GM18951 (cell line): ENCODE measurements at regions of chr14 and their contacts with region 1.

Region 1: GRCh38 chr14:34714320-34715126 is at the start of gene CFL2:
- POLR2A ChIP-seq: peak; percentile 73

Region 2: GRCh38 chr14:34671716-34672115 is 42.8 kb before region 1 on chr14:
- in situ Hi-C with region 1: loop called (anchors 5 kb)
- POLR2A ChIP-seq: no peak